ENCODE measurements at regions of chr20 and their contacts with region 1.

Region 1: DNA sequence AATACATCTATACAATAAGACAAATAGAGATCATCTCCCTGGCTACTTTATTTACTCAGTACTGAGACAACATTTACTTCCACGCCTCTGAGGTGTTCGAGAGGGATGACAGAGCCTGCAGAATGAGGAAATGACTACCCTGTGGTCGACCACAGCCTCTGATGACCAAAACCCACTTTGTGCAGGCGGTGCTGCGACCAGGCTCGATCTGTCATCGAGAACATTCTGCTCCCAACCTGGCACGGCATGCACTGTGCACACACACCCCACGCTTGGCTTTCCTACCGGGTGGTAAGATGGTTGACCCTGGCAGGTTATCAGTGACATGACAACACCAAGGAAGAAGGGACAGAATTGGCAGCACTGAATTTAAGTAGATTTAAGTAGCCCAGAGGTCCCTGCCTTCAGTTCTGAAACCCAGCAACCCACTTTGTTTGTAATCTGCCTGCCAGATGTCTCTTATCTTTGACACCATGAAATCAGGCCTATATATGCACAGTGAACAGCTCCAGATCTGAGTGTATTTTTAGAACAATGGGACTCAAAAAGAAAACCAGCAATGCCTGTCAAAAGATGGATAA is 42.6 kb downstream of the TTI1 start:
- DNase-seq: peak; percentile 87
- H3K4me3 Mint-ChIP-seq: no peak overlapping the region
- H3K27ac Mint-ChIP-seq: peak overlapping the region; percentile 49
- H3K4me1 Mint-ChIP-seq: peaks cover 22% of the 10 kb centered on the region
- H3K27me3 Mint-ChIP-seq: no peaks in the 10 kb centered on the region

Region 2: DNA sequence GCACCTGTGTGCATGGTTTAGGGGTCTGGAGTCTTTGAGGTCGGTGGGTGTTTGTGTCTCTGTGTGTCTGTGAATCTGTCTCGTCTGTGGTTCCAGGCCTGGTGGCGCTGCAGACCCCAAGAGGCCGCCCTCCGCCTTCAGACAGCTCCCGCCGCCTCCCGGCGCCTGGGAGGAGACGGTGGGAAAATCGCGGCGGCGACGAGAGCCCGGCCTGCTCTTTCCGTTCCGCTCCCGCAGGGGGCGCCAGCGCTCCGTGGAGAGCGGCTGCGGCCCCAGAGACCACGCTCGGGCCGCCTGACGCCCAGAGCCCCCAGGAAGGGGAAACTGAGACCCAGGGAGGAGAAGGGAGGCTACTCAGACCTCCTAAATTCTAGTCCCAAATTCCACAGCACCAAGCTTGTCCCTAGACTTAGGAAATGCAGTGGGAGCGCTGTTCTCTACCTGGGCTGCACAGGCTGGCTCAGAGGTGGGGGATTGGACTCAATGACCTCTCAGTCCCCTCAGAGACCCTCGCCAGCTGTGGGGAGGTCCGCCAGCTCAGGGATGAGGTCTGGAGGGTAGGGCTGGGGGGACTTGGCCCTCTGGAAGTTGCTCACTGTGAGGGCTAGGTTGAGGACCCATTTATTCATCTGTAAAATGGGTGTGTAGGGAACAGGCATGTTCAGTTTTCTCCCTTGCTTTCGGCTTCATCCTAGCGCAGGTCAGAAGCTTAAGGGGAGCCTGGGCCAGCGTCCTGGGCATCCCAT is 426.1 kb before region 1 on chr20:
- CTCF ChIA-PET with region 1: interaction called, 22 read pairs
- POLR2A ChIA-PET with region 1: no interaction called
- intact Hi-C with region 1: no loop called
- DNase-seq: peak; percentile 58
- H3K4me3 Mint-ChIP-seq: no peak overlapping the region
- H3K27ac Mint-ChIP-seq: no peak overlapping the region
- H3K4me1 Mint-ChIP-seq: peaks cover 2% of the 10 kb centered on the region
- H3K27me3 Mint-ChIP-seq: peaks cover 38% of the 10 kb centered on the region

Region 3: GRCh38 chr20:37651932-37652331 is 338.7 kb before region 1 on chr20:
- CTCF ChIA-PET with region 1: interaction called, 3 read pairs
- POLR2A ChIA-PET with region 1: no interaction called
- intact Hi-C with region 1: loop called (anchors 5 kb)
- DNase-seq: peak; percentile 53
- H3K4me3 Mint-ChIP-seq: no peak overlapping the region
- H3K27ac Mint-ChIP-seq: no peak overlapping the region
- H3K4me1 Mint-ChIP-seq: no peaks in the 10 kb centered on the region
- H3K27me3 Mint-ChIP-seq: peaks cover 30% of the 10 kb centered on the region

Region 4: GRCh38 chr20:37901654-37902503 is 88.8 kb before region 1 on chr20:
- CTCF ChIA-PET with region 1: interaction called, 5 read pairs
- POLR2A ChIA-PET with region 1: no interaction called
- intact Hi-C with region 1: loop called (anchors 2 kb)
- DNase-seq: peak; percentile 55
- H3K4me3 Mint-ChIP-seq: peak overlapping the region; percentile 31
- H3K27ac Mint-ChIP-seq: no peak overlapping the region
- H3K4me1 Mint-ChIP-seq: peaks cover 14% of the 10 kb centered on the region
- H3K27me3 Mint-ChIP-seq: peaks cover 59% of the 10 kb centered on the region

Region 5: DNA sequence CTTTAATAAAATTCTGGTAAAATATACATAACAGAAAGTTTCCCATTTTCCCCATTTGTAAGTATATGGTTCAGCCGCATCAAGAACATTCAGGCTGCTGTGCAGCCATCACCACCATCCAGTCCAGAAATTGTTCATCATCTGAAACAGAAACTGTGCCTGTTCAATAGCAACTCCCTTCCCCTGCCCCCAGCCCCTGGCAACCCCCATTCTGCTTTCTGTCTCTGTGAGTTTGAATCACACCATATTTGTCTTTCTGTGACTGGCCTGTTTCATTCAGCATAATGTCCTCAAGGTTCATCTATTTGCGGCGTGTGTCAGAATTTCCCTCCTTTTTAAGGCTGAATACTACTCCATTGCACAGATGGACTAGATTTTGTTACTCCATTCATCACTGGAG is 68.6 kb before region 1 on chr20:
- CTCF ChIA-PET with region 1: no interaction called
- POLR2A ChIA-PET with region 1: no interaction called
- intact Hi-C with region 1: loop called (anchors 2 kb)
- DNase-seq: peak; percentile 81
- H3K4me3 Mint-ChIP-seq: no peak overlapping the region
- H3K27ac Mint-ChIP-seq: no peak overlapping the region
- H3K4me1 Mint-ChIP-seq: peaks cover 19% of the 10 kb centered on the region
- H3K27me3 Mint-ChIP-seq: peaks cover 28% of the 10 kb centered on the region

Region 6: DNA sequence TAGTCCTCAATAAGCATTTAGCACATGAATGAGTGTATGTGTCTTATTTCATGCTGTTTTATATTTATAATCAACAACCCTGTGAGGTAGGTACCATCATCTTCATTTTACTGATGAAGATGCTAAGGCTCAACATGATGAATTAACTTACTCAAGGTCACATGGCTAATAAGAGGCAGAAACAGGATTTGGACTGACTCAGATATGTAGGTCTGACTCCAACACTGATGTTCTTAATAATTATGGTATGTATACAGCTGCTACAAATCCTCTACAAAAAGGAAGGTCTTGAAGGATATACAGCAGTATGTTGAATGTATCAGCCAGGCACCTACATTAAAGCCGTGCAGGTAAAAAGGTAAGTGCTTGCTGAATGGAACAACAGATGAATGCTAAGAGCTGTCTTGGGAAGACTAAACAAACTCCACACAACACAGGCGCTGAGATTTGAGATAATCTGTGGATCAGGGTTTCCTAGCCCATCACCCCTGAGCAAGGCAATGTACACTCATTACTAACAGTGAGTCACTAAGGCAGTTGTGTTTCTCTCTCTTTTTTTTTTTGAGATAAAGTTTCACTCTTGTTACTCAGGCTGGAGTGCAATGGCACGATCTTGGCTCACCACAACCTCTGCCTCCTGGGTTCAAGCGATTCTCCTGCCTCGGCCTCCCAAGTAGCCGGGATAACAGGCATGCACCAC is 10.7 kb after region 1 on chr20:
- CTCF ChIA-PET with region 1: interaction called, 10 read pairs
- POLR2A ChIA-PET with region 1: interaction called, 3 read pairs
- intact Hi-C with region 1: loop called (anchors 1 kb)
- DNase-seq: peak; percentile 52
- H3K4me3 Mint-ChIP-seq: no peak overlapping the region
- H3K27ac Mint-ChIP-seq: peak overlapping the region; percentile 65
- H3K4me1 Mint-ChIP-seq: peaks cover 40% of the 10 kb centered on the region
- H3K27me3 Mint-ChIP-seq: no peaks in the 10 kb centered on the region

Region 7: DNA sequence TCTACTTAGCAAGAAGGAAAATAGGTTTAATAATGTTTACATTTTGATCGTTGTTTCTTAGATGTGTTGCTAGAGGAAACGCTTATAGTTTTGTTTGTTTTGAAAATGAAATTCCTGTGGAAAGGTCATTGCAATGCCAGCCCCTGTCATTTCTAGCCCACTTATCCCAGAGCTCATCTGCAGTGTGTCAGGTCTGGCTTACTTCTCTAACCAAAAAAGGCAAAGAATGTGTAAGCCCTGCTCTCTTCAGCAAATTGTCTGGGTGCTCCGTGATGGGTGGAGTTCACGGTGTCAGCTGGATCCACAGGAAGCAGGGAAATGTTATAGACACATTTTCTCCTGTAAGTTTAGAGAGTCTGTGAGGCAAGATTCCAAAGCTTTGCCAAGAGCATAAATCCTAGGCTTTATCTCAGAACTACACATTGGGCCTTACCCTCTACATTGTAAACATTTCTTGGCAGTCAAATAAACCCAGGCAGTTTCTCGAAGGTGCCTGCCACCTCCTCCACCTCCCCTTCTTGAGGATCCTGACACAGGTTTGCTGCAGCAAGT is 93.8 kb after region 1 on chr20:
- CTCF ChIA-PET with region 1: no interaction called
- POLR2A ChIA-PET with region 1: no interaction called
- intact Hi-C with region 1: no loop called
- DNase-seq: no peak
- H3K4me3 Mint-ChIP-seq: no peak overlapping the region
- H3K27ac Mint-ChIP-seq: no peak overlapping the region
- H3K4me1 Mint-ChIP-seq: no peaks in the 10 kb centered on the region
- H3K27me3 Mint-ChIP-seq: no peaks in the 10 kb centered on the region